Prostate gland (tissue), 2 donors: ENCODE measurements at regions of chr11 and their contacts with region 1.

Region 1: GRCh38 chr11:65615229-65615941 is at the start of gene PCNX3:
- DNase-seq: peak; percentile 100
- H3K4me3 ChIP-seq: peak within 1 kb of the TSS; percentile 75 to 90
- H3K27ac ChIP-seq: peak within 1 kb of the TSS; percentile 93 to 94
- H3K4me1 ChIP-seq: peaks cover 37% of the 10 kb centered on the region
- H3K27me3 ChIP-seq: no peaks in the 10 kb centered on the region
- CTCF ChIP-seq: peak in 2 of 4 experiments; percentile 22 to 35
- POLR2A ChIP-seq: peak; percentile 37
- total RNA-seq, gene PCNX3: 32.0 to 67.9 TPM

Region 2: DNA sequence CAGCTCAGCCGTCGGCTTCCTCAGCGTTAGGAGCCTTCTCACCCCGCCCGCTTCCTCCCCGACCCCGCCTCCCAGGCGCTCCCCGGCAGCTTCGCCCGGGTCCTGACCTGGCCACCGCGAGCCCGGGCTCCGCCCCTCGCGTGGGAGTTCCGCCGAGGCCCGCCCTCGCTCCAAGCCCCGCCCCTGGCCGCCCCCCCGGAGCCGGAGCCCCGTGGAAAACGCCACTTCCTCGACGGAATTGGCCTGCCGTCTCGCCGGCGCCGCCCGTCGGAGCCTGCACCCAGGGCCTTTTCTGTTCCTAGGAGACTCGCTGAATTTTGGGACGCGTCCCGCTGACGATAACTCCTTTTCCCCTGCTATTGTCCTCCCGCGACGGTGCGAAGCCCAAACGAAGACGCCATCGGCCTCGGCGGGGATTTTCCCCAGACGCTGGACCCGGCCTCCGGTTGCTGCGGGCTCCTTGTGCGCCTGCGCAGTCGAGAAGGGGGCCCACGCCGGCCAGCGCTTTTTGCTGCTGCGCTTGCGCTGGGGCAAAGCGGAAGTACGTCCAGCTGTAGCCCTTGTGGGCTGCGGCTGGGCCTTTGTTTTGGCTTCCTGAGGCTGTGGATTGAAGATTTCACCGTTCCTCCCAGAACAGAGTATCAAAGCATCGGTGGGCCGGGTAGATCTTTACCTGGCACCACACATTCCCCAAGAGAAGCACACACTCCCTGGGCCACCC is 37.3 kb after region 1 on chr11:
- intact Hi-C with region 1: loop called (anchors 5 kb)
- DNase-seq: peak; percentile 84
- H3K4me3 ChIP-seq: peak overlapping the region; percentile 40 to 47
- H3K27ac ChIP-seq: peak overlapping the region; percentile 96
- H3K4me1 ChIP-seq: peaks cover 27% of the 10 kb centered on the region
- H3K27me3 ChIP-seq: no peaks in the 10 kb centered on the region
- CTCF ChIP-seq: peak in 1 of 4 experiments; percentile 43
- POLR2A ChIP-seq: peak; percentile 62

Region 3: GRCh38 chr11:66136752-66137123 is 521.4 kb after region 1 on chr11:
- intact Hi-C with region 1: no loop called
- DNase-seq: no peak
- H3K4me3 ChIP-seq: no peak overlapping the region
- H3K27ac ChIP-seq: no peak overlapping the region
- H3K4me1 ChIP-seq: no peaks in the 10 kb centered on the region
- H3K27me3 ChIP-seq: no peaks in the 10 kb centered on the region
- CTCF ChIP-seq: no peak
- POLR2A ChIP-seq: no peak